ENCODE measurements at regions of chr16 and their contacts with region 1.

Region 1: GRCh38 chr16:14337303-14338191 is 266.4 kb downstream of the MRTFB start:
- DNase-seq: no peak

Region 2: GRCh38 chr16:14455576-14455975 is 118.0 kb after region 1 on chr16:
- in situ Hi-C with region 1: loop called (anchors 10 kb)
- DNase-seq: no peak

Region 3: GRCh38 chr16:14486520-14487303 is 149.2 kb after region 1 on chr16:
- in situ Hi-C with region 1: no loop called
- DNase-seq: peak; percentile 91